Activated T-helper 1 cell treated with anti-CD3 and anti-CD28 coated beads, Interleukin-12 subunit alpha, Interleukin-12 subunit beta, Interleukin-2, Interleukin-4 antibody, amounts not matched to agents 30 ng/mL and 10 ng/mL and 1 ng/mL, durations not matched to agents 14 hours and 24 hours and 36 hours (primary cell): ENCODE measurements at regions of chr13 and their contacts with region 1.

Region 1: GRCh38 chr13:31951215-31951678 is 80.3 kb upstream of the FRY start:
- DNase-seq: peak; percentile 30
- H3K4me3 Mint-ChIP-seq: no peak overlapping the region
- H3K27ac Mint-ChIP-seq: peak overlapping the region; percentile 54
- H3K4me1 Mint-ChIP-seq: peaks cover 10% of the 10 kb centered on the region
- H3K27me3 Mint-ChIP-seq: peaks cover 3% of the 10 kb centered on the region

Region 2: DNA sequence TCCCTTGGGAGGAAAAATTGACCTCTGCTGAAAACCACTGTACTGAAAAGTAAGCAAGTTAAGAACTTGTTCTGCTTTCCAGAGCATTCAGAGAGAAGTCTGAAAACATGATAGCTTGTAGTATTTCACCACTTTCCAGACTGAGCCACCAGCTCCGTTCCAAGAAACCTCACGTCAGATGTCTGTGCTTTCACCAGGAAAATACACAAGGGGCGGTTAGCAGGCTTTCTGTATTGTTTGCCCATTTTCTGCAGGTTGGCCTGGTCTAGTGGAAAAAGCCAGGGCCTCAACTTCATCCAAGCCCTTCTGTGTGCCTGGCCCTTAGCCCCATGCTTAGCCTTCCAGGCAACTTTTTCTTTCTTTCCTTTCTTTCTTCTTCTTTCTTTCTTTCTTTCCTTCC is 175.6 kb before region 1 on chr13:
- intact Hi-C with region 1: no loop called
- DNase-seq: no peak
- H3K4me3 Mint-ChIP-seq: no peak overlapping the region
- H3K27ac Mint-ChIP-seq: no peak overlapping the region
- H3K4me1 Mint-ChIP-seq: peaks cover 5% of the 10 kb centered on the region
- H3K27me3 Mint-ChIP-seq: peaks cover 6% of the 10 kb centered on the region

Region 3: GRCh38 chr13:31930901-31931522 is 20.2 kb before region 1 on chr13:
- intact Hi-C with region 1: loop called (anchors 2 kb)
- DNase-seq: peak; percentile 48
- H3K4me3 Mint-ChIP-seq: no peak overlapping the region
- H3K27ac Mint-ChIP-seq: no peak overlapping the region
- H3K4me1 Mint-ChIP-seq: peaks cover 17% of the 10 kb centered on the region
- H3K27me3 Mint-ChIP-seq: peaks cover 4% of the 10 kb centered on the region

Region 4: DNA sequence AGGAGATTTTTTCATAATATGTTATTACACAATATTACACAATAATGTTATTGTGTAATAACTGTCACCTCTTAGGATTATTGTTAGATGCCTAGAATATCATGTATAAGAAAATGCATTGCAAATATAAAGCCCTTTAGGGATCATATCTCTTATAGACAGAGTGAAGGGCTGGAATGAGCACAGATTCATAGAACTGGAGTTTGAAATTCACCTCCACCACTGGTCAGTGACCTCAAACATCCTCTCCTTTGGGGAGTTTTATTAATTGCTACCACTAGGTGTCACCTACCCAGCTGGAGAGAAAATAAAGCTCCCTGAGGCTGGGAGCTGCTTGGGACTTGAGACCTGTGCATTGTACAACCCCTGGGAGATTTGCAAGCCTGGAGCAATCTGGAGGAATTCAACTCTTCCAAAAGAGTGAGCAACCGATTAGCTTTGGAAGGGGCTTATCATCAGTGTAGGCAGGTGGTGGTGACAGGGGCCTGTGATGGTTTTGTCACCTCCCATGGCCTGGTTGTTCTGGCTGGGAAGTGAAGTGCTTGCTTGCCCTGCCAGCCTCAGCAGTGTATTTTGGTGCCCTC is 50.0 kb after region 1 on chr13:
- intact Hi-C with region 1: no loop called
- DNase-seq: no peak
- H3K4me3 Mint-ChIP-seq: no peak overlapping the region
- H3K27ac Mint-ChIP-seq: no peak overlapping the region
- H3K4me1 Mint-ChIP-seq: no peaks in the 10 kb centered on the region
- H3K27me3 Mint-ChIP-seq: peaks cover 4% of the 10 kb centered on the region